ENCODE measurements at regions of chr7 and their contacts with region 1.

Region 1: GRCh38 chr7:30594549-30595435 is at the start of gene GARS1:
- DNase-seq: peak; percentile 85 to 92 (median 90)
- ATAC-seq: peak; percentile 91
- H3K4me3 ChIP-seq: peak within 1 kb of the TSS; percentile 62
- H3K4me3 Mint-ChIP-seq: peak within 1 kb of the TSS; percentile 91 to 100 (median 99)
- H3K27ac ChIP-seq: peak within 1 kb of the TSS; percentile 91
- H3K27ac Mint-ChIP-seq: peak within 1 kb of the TSS; percentile 97 to 100 (median 99)
- H3K4me1 ChIP-seq: peaks cover 3 to 22% of the 10 kb centered on the region in 2 donors
- H3K4me1 Mint-ChIP-seq: peaks cover 52 to 88% (median 77%) of the 10 kb centered on the region in 7 donors
- H3K27me3 ChIP-seq: no peaks in the 10 kb centered on the region
- H3K27me3 Mint-ChIP-seq: no peaks in the 10 kb centered on the region
- total RNA-seq, gene GARS1: 73.8 to 143 (median 75.8) TPM

Region 2: GRCh38 chr7:30771174-30771879 is 176.5 kb after region 1 on chr7 and contains the start of gene MINDY4:
- CTCF ChIA-PET with region 1: no interaction called
- POLR2A ChIA-PET with region 1: no interaction called
- intact Hi-C with region 1: loop called (anchors 1 kb)
- DNase-seq: peak; percentile 30 to 69 (median 52)
- ATAC-seq: peak; percentile 89
- H3K4me3 ChIP-seq: peak within 1 kb of the TSS; percentile 82
- H3K4me3 Mint-ChIP-seq: peak within 1 kb of the TSS; percentile 68 to 94 (median 88)
- H3K27ac ChIP-seq: peak within 1 kb of the TSS; percentile 71
- H3K27ac Mint-ChIP-seq: peak within 1 kb of the TSS; percentile 51 to 83 (median 70)
- H3K4me1 ChIP-seq: no peaks in the 10 kb centered on the region
- H3K4me1 Mint-ChIP-seq: peaks cover 0 to 12% (median 6%) of the 10 kb centered on the region in 7 donors
- H3K27me3 ChIP-seq: no peaks in the 10 kb centered on the region
- H3K27me3 Mint-ChIP-seq: peaks cover 0 to 9% (median 0%) of the 10 kb centered on the region in 5 donors
- total RNA-seq, gene MINDY4: 0.82 to 1.5 (median 0.94) TPM

Measured in naive thymus-derived CD4-positive, alpha-beta T cell (primary cell).